ENCODE measurements at regions of chr1 and their contacts with region 1.

Region 1: DNA sequence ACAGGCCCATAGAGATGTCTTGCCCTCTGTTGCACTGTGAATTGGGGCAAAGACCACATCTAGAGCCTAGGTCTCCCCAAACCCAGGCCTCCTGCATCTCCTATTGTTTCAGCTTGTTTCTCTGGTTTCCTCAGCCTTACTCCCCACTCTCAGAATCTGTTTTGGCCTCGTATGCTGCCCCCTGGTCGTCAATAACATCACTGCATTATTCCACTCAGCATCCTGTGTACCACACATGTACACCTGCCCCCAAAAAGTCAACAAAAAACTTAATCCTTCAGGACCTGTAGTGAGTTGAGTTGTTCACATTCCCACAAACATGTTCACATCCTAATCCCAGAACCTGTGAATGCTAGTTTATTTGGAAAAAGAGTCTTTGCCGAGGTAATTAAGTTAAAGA is 184.8 kb downstream of the BRINP2 start:
- DNase-seq: no peak
- ATAC-seq: peak in 2 of 4 donors; percentile 54 to 58
- H3K4me3 ChIP-seq: no peak overlapping the region
- H3K27ac ChIP-seq: no peak overlapping the region
- H3K4me1 ChIP-seq: no peaks in the 10 kb centered on the region
- H3K27me3 ChIP-seq: no peaks in the 10 kb centered on the region
- CTCF ChIP-seq: peak; percentile 34

Region 2: DNA sequence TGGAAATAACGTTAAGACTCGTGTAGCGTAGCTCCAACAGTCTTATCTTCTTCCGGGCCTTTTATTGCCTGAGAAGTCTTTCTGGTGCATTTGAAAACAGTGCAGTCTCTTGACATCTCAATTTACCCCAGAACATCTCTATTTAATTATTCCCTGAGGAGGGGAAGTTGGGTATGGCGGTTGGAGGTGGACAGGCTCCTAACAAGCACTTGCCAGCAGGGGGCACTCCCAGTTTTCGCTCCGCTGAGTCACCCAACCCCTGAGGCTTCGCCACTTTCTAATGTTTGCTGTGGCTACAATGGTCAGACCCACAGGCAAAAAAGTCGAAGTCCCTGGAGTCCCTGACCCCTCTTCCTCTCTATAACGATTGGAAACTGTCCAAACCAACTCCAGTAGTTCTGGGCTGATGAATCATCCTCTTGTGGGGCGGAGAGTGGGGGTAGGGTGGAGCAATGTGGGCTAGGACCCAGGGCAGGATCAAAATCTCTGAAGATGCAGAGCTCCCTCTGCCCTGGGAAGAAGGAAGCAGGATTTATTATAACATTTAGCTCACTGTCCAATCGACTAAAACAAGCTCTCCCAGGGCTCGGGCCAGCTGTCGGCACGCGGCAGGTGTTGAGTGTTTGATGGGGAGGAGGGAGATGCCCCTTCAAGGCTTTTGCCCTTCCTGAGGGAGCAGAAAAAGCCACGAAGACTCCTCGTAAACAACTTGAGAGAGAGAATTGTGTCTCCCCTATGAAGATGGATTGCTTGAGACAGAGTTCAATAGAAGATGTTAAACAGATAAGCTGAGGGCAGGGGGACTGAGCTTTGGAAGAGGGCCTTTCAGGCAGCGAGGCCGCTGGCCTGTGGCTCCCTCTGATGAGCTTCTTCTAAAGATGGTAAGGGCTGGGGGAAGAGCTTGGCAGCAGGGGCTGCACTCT is 99.2 kb before region 1 on chr1:
- intact Hi-C with region 1: loop called (anchors 2 to 10 kb)
- DNase-seq: peak; percentile 57 to 81
- ATAC-seq: peak; percentile 89 to 98 (median 92)
- H3K4me3 ChIP-seq: no peak overlapping the region
- H3K27ac ChIP-seq: no peak overlapping the region
- H3K4me1 ChIP-seq: peaks cover 5% of the 10 kb centered on the region
- H3K27me3 ChIP-seq: no peaks in the 10 kb centered on the region
- CTCF ChIP-seq: peak; percentile 79

Region 3: DNA sequence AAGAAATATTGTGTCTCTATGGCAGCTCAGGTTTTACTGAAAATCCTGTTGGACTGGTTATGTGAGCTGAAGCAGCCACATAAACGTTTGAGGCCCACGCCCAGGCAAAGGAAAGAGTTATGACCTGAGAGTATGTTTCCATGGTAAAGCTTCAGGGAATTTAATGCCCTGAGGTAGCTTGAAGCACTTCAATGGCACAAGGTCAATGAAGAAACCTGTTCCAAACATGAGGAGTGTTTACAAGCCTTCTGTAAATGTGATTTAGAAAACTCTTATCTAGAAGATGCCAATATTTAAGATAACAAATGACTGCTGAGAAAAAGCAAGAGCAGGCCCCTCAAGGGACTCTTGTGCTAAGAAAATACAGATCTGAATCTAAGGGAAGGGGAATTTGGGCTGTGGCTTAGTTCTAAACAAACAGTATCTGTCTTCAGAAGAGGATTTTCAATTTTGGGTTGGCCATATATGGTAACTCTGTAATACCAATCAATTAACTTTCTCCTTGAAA is 230.1 kb after region 1 on chr1:
- intact Hi-C with region 1: no loop called
- DNase-seq: no peak
- ATAC-seq: no peak
- H3K4me3 ChIP-seq: no peak overlapping the region
- H3K27ac ChIP-seq: no peak overlapping the region
- H3K4me1 ChIP-seq: no peaks in the 10 kb centered on the region
- H3K27me3 ChIP-seq: peaks cover 0 to 3% (median 0%) of the 10 kb centered on the region in 3 donors
- CTCF ChIP-seq: no peak